ENCODE measurements at regions of chr4 and their contacts with region 1.

Region 1: GRCh38 chr4:118772081-118772766 is 63.7 kb downstream of the SEC24D start:
- DNase-seq: peak; percentile 9 to 50 (median 24)
- H3K4me3 ChIP-seq: no peak overlapping the region
- H3K4me3 Mint-ChIP-seq: no peak overlapping the region
- H3K27ac ChIP-seq: no peak overlapping the region
- H3K27ac Mint-ChIP-seq: no peak overlapping the region
- H3K4me1 ChIP-seq: no peaks in the 10 kb centered on the region
- H3K4me1 Mint-ChIP-seq: no peaks in the 10 kb centered on the region
- H3K27me3 ChIP-seq: no peaks in the 10 kb centered on the region
- H3K27me3 Mint-ChIP-seq: no peaks in the 10 kb centered on the region
- CTCF ChIP-seq: peak; percentile 67

Region 2: DNA sequence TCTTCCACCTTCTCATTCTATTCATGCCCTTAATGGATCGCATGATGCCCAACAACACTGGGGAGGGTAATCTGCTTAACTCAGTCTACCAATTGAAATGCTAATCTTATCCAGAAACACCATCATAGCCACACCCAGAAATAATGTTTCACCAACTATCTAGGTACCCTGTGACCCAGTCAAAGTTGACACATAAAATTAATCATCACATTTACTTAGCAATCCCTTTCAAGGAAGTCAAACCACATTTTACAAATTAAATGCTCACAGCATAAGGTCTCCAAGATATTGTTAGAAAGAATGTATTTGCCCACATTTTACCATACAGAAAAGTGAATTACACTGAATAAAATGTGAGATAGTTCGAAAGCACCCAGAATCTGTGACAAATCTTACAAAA is 511.9 kb before region 1 on chr4:
- intact Hi-C with region 1: no loop called
- DNase-seq: no peak
- H3K4me3 ChIP-seq: no peak overlapping the region
- H3K4me3 Mint-ChIP-seq: no peak overlapping the region
- H3K27ac ChIP-seq: no peak overlapping the region
- H3K27ac Mint-ChIP-seq: no peak overlapping the region
- H3K4me1 ChIP-seq: no peaks in the 10 kb centered on the region
- H3K4me1 Mint-ChIP-seq: peaks cover 4% of the 10 kb centered on the region
- H3K27me3 ChIP-seq: peaks cover 0 to 2% of the 10 kb centered on the region in 2 donors
- H3K27me3 Mint-ChIP-seq: peaks cover 6 to 12% (median 7%) of the 10 kb centered on the region in 3 donors
- CTCF ChIP-seq: no peak

Region 3: DNA sequence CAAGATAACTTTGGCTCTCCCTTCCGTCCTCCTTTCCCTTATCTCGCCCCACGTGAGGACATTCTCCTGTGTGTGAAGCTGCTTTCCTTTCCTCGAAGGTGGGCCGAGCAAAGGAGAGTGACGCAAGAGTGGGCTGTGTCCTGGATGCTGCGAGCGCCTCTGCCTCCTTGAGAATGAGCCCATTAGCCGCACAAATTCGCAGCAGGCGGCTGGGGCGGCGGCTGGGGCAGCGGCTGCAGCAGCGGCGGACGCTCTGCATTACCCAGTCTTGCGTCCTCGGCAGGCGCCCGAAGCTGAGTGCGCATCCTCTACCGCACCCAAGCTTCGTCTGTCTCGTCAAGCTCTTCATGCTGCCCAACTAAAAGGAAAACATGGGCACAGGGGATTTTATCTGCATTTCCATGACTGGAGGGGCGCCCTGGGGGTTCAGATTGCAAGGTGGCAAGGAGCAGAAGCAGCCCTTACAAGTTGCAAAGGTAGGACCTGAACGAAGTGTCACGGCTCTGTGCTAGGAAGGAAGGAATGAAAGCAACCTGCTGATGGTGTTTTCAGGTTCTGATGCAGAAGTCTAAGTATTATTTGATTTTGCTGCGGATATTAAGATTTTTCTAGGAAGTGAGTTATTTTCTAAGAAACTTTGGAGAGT is 116.6 kb after region 1 on chr4 and contains the start of gene SYNPO2:
- intact Hi-C with region 1: loop called in 1 of 2 experiments (anchors 5 kb)
- DNase-seq: no peak
- H3K4me3 ChIP-seq: peak within 1 kb of the TSS in 1 of 3 experiments; percentile 62
- H3K4me3 Mint-ChIP-seq: peak within 1 kb of the TSS; percentile 71 to 89
- H3K27ac ChIP-seq: no peak within 1 kb of the TSS
- H3K27ac Mint-ChIP-seq: no peak within 1 kb of the TSS
- H3K4me1 ChIP-seq: peaks cover 8 to 10% of the 10 kb centered on the region in 2 donors
- H3K4me1 Mint-ChIP-seq: peaks cover 17% of the 10 kb centered on the region
- H3K27me3 ChIP-seq: peaks cover 24 to 38% of the 10 kb centered on the region in 2 donors
- H3K27me3 Mint-ChIP-seq: peaks cover 23 to 40% (median 27%) of the 10 kb centered on the region in 3 donors
- CTCF ChIP-seq: no peak
- polyA plus RNA-seq, gene SYNPO2: 0.04 TPM in 1 of 3 donors, not detected in the others

Region 4: GRCh38 chr4:118968005-118968404 is 195.8 kb after region 1 on chr4:
- intact Hi-C with region 1: loop called in 1 of 2 experiments (anchors 10 kb)
- DNase-seq: peak; percentile 60 to 71 (median 70)
- H3K4me3 ChIP-seq: peak overlapping the region in 1 of 3 experiments; percentile 13
- H3K4me3 Mint-ChIP-seq: peak overlapping the region in 1 of 2 donors; percentile 41
- H3K27ac ChIP-seq: peak overlapping the region; percentile 3 to 69
- H3K27ac Mint-ChIP-seq: peak overlapping the region; percentile 61 to 93 (median 82)
- H3K4me1 ChIP-seq: peaks cover 19 to 23% of the 10 kb centered on the region in 2 donors
- H3K4me1 Mint-ChIP-seq: peaks cover 30% of the 10 kb centered on the region
- H3K27me3 ChIP-seq: no peaks in the 10 kb centered on the region
- H3K27me3 Mint-ChIP-seq: peaks cover 0 to 3% (median 0%) of the 10 kb centered on the region in 3 donors
- CTCF ChIP-seq: no peak